ENCODE measurements at regions of chr4 and their contacts with region 1.

Region 1: DNA sequence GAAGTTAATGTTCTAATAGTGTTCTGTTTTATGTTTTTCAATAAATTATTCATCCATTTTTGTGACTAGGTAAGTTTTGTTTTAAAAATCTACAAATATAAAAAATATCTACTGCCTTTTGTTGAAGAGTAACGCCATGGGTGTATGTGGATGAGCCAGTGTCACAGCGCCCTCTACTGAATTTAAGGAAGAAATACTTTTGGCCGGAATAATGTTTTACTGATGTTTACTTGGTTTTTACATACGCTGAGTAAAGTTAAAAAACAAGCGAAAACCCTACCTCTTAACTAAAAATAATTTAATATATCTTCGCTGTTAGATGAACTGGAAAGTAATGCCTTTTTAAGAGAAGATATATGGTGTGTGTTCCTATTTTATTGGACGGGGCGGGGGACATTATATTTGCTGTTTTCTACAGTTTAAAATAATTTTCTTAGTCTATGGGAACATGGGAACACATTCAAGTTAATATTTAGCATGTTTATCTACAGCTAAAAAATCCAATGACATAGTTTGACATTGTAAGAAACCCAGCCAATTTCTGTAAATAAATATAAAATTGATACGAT is 86.1 kb downstream of the CPE start:
- DNase-seq: peak; percentile 55
- CTCF ChIP-seq: peak; percentile 65

Region 2: GRCh38 chr4:164768516-164768915 is 696.4 kb before region 1 on chr4:
- in situ Hi-C with region 1: loop called (anchors 25 kb)
- DNase-seq: no peak
- CTCF ChIP-seq: peak; percentile 41

Region 3: DNA sequence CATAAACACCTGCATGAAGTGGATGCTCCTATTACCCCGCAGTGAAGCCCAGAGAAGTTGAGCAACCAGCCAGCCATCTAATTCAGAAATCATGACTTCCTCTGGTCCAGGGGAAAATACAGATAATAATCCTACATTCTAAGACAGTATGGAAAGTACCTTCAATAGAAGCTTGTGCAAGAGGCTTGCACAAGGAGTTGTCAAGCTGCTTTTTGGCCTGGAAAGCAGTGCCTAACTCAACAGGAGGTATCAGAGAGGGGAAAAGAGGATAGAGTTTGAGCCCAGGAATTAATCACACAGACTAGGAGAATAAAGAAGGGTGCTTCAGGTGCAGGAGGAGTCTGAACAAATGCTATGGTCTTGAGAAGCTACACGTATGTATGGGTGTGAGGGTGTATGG is 379.0 kb before region 1 on chr4:
- in situ Hi-C with region 1: no loop called
- DNase-seq: no peak
- CTCF ChIP-seq: no peak

Region 4: DNA sequence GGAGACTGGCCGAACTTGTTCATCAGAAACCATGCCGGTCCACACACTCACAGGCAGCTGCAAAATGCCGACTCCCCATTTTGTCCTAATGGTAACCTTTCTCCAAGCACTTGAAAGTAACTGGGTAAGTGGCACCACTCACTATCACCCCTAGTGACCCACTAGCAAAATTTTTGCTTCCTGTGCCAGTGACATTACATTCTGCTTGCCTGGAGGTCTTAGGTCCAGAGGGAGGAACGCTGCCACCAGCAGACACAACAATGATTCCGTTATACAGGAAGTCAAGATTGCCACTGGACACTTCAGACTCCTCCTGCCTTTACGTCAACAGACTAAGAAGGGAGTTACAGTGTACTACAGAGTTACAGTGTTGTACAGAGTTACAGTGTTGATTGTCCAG is 340.4 kb before region 1 on chr4:
- in situ Hi-C with region 1: loop called (anchors 5 kb)
- DNase-seq: no peak
- CTCF ChIP-seq: no peak

Region 5: DNA sequence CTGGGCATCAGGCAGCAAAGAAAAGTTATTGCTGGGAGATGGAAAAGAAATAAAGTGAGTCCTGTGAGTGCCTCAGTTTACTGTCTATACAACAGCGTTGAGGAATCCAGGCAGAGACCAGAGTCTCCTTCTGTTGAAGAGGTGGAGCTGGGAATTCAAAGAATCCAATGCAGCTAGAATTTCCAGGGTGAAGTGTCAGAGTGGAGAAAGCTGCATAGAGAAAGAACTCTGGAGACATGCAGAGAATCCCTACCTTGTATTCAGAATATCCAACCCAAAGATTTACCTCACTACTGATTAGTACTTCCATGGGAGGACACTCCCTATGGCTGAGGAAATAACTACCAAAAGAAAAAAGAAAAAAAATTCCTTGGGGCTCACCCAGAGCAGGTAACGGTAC is 428.4 kb after region 1 on chr4:
- in situ Hi-C with region 1: no loop called
- DNase-seq: no peak
- CTCF ChIP-seq: no peak

Region 6: DNA sequence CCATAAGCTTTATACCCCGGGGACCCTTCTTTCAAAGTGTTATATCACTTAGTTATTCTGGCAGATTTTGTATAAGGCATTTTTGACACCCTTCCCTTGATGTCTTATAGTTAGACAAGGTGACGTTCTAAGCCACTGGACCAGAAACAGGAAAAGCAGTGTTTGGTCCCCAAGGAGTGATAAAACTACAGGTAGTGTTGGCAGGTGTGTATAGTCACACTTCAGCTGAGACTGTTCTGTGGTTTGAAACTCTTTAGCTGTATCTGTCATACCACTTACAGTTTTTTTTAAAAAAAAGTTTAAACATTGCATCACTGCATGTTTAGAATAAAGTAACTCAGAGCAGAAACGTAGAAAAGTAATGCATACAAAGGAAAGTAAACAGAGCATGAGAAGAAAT is 456.6 kb after region 1 on chr4:
- in situ Hi-C with region 1: no loop called
- DNase-seq: no peak
- CTCF ChIP-seq: no peak